ENCODE measurements at regions of chr11 and their contacts with region 1.

Region 1: DNA sequence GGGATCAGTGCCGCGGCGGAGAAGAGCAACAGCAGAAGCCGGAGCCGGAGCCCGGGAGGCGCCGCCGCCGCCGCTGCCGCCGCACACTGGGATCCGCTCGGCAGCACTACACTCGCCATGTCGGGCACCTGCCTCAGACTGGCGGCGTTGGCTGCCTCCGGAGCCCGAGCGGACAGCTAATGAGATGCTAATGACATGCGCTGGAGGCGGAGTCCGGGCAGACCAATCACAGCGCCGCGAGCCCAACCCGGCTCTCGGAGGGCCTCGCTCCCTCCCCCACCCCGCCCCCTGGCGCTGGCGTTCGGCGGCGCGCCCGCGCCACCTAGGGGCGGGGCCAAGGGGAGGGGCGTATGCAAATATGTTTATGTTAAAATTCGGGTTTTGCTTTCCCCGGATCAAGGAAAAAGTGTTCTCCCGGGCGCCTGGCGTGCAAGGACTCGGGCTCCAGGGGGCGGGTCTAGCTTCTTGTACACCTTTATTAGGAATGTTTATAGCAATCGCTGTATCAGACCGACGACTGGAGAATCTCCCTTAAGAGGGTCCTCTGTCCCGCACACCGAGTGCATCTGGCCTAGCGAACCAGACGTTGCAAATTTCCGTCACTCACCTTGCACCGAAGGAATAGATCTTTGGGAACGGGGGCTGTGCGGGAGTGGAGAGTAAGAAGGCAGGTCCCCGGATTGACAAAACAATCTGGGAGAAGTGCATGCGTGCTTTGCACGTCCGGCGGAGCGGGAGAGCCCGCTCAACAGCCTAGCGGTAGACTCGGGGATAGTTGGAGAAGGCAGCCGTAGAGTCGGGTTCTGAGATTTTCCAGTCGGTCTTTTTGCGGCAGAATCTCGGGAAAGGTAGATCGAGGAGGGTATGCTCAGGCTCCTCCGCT is at the start of gene CADM1:
- DNase-seq: peak; percentile 99 to 100
- H3K4me3 ChIP-seq: peak within 1 kb of the TSS; percentile 76
- H3K4me3 Mint-ChIP-seq: no peak within 1 kb of the TSS
- H3K27ac Mint-ChIP-seq: peak within 1 kb of the TSS; percentile 90
- H3K4me1 ChIP-seq: peaks cover 24% of the 10 kb centered on the region
- H3K4me1 Mint-ChIP-seq: no peaks in the 10 kb centered on the region
- H3K27me3 ChIP-seq: no peaks in the 10 kb centered on the region; the same call in 1 of the 2 replicates
- H3K27me3 Mint-ChIP-seq: no peaks in the 10 kb centered on the region
- CTCF ChIP-seq: peak; percentile 73 to 90
- total RNA-seq, gene CADM1: 440 and 534 TPM in 2 replicates

Region 2: DNA sequence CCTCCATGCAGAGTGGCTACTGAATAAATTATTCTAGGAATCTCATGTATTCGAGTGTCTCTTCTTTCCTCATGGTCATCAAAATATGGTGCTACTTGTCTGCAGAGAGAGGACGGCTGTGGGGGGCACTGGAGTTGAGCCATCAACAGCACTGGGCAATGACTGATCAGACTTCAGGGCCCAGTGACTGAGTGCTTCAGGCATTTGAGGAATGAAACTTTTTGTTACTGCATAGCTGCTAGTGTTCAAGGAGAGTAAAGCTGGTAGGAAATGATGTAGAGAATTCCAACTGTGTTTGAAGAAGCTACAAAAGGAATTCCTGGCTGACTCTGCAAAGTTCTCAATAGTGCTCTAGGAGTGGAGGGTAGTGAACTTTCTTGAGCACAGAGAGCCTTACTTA is 278.0 kb before region 1 on chr11:
- CTCF ChIA-PET with region 1: no interaction called
- POLR2A ChIA-PET with region 1: no interaction called
- intact Hi-C with region 1: loop called (anchors 5 kb)
- DNase-seq: peak; percentile 80
- H3K4me3 ChIP-seq: no peak overlapping the region
- H3K4me3 Mint-ChIP-seq: peak overlapping the region; percentile 40
- H3K27ac Mint-ChIP-seq: peak overlapping the region; percentile 54
- H3K4me1 ChIP-seq: peaks cover 33% of the 10 kb centered on the region
- H3K4me1 Mint-ChIP-seq: peaks cover 27% of the 10 kb centered on the region
- H3K27me3 ChIP-seq: no peaks in the 10 kb centered on the region
- H3K27me3 Mint-ChIP-seq: no peaks in the 10 kb centered on the region
- CTCF ChIP-seq: peak in 1 of 2 experiments; percentile 2

Region 3: DNA sequence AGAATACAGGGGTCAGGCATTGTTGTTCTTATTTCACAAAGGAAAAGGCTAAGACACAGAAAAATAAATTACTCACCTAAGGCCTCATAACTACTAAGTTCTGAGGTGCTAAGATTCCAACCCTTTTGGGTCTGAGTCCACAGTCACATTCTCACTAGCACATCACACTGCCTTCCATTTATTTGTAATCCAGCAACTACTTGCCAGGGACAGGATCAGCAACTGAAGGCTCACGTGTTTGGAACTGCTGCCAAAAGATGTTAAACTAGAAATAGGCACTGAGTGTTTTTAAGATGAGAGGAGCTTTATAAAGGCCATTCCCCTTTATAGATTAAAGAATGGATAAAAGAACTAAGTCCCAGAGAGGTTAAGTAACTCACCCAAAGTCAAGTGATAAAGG is 58.3 kb before region 1 on chr11:
- CTCF ChIA-PET with region 1: interaction called, 3 read pairs
- POLR2A ChIA-PET with region 1: no interaction called
- intact Hi-C with region 1: loop called (anchors 1 kb)
- DNase-seq: no peak
- H3K4me3 ChIP-seq: no peak overlapping the region
- H3K4me3 Mint-ChIP-seq: no peak overlapping the region
- H3K27ac Mint-ChIP-seq: no peak overlapping the region
- H3K4me1 ChIP-seq: no peaks in the 10 kb centered on the region
- H3K4me1 Mint-ChIP-seq: peaks cover 17% of the 10 kb centered on the region
- H3K27me3 ChIP-seq: no peaks in the 10 kb centered on the region
- H3K27me3 Mint-ChIP-seq: no peaks in the 10 kb centered on the region
- CTCF ChIP-seq: no peak

Region 4: DNA sequence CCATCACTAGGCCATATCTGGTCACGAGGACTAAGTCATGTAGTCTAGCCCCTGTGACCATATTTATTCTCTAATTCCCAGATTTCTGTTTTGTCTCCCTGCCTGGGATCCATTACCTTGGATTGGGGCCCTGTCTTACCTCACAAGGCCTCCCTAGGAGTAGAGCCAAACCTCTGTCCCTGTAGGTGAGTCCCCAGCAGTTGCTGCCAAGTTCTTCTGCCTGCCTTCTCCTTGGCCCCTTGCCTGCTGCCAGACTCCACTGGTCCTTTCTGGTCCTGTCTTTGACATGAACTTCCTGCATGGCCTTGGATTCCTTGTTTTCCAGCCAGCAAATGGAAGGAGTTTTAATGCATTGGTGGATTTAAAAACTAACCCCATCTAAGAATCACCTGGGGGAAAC is 35.3 kb after region 1 on chr11:
- CTCF ChIA-PET with region 1: interaction called, 13 read pairs
- POLR2A ChIA-PET with region 1: interaction called, 7 read pairs
- intact Hi-C with region 1: loop called (anchors 2 kb)
- DNase-seq: no peak
- H3K4me3 ChIP-seq: no peak overlapping the region
- H3K4me3 Mint-ChIP-seq: no peak overlapping the region
- H3K27ac Mint-ChIP-seq: no peak overlapping the region
- H3K4me1 ChIP-seq: peaks cover 20% of the 10 kb centered on the region
- H3K4me1 Mint-ChIP-seq: peaks cover 11% of the 10 kb centered on the region
- H3K27me3 ChIP-seq: no peaks in the 10 kb centered on the region
- H3K27me3 Mint-ChIP-seq: no peaks in the 10 kb centered on the region
- CTCF ChIP-seq: no peak

Region 5: DNA sequence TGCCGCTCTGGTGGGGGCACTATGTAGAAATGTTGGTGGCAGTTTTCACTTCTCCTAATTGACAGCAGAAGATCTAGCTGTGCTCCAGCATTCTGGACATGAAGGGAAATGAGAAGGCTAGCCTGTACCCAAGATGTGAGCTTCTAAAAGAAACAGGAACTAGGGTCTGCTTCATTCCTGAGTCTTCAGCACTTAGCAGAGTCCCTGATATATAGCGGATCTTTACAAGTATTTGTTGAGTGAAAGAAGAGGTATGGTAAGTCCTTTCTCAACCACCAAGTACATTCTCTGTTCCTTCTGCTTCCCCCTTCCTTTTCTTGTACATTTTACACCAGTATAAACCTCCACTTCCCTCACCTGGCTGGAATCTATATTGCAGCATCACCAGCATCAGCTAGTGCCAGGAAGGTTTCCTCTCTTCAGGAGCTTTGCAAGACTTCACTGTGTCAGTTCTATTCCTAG is 408.0 kb after region 1 on chr11:
- CTCF ChIA-PET with region 1: interaction called, 4 read pairs
- POLR2A ChIA-PET with region 1: no interaction called
- intact Hi-C with region 1: loop called (anchors 2 kb)
- DNase-seq: peak in 1 of 2 experiments; percentile 49
- H3K4me3 ChIP-seq: no peak overlapping the region
- H3K4me3 Mint-ChIP-seq: no peak overlapping the region
- H3K27ac Mint-ChIP-seq: no peak overlapping the region
- H3K4me1 ChIP-seq: no peaks in the 10 kb centered on the region
- H3K4me1 Mint-ChIP-seq: no peaks in the 10 kb centered on the region
- H3K27me3 ChIP-seq: no peaks in the 10 kb centered on the region
- H3K27me3 Mint-ChIP-seq: peaks cover 7% of the 10 kb centered on the region
- CTCF ChIP-seq: peak; percentile 62 to 67

Measured in Caco-2 (cell line).